Activated T-helper 1 cell treated with anti-CD3 and anti-CD28 coated beads, Interleukin-12 subunit alpha, Interleukin-12 subunit beta, Interleukin-2, Interleukin-4 antibody, amounts not matched to agents 30 ng/mL and 10 ng/mL and 1 ng/mL, durations not matched to agents 14 hours and 24 hours and 36 hours (primary cell): ENCODE measurements at regions of chr6 and their contacts with region 1.

Region 1: DNA sequence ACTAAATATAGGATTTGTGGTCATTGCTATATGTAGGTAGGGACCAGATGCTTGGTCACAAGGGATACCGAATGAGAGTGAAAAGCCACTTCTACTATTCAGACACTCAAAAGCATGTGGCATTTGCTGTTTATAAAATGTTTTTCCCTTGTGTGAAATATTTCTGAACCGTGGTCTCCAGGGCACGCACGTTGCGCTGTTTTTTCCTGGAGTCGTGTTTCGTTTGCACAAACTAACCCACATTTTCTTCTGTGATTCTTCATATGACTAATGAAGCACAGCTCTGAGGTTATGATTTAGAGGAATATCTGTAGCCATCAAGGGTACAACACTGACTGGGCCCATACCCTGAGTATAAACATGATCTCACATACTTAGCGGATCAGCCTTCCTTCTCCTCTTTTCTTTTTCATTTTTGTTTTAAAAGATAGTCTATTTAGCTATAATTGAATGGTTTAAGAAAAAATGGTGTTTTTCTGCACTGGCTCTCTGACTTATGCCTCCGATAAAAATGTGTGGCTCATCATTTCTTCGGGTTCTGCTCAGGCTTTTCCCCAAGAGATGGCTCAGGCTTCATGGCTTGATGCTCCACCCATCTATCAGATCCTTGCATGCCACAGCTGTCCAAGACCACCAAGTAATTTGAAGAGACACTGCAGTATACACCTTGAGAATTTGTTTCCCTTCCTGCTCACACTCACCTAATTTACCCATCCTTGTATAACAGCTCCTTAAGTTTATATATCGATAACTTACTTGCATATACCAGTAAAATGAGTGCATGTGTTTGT is 59.9 kb upstream of the HBS1L start:
- DNase-seq: peak; percentile 53
- H3K4me3 Mint-ChIP-seq: peak overlapping the region; percentile 66
- H3K27ac Mint-ChIP-seq: peak overlapping the region; percentile 97
- H3K4me1 Mint-ChIP-seq: peaks cover 88% of the 10 kb centered on the region
- H3K27me3 Mint-ChIP-seq: no peaks in the 10 kb centered on the region

Region 2: DNA sequence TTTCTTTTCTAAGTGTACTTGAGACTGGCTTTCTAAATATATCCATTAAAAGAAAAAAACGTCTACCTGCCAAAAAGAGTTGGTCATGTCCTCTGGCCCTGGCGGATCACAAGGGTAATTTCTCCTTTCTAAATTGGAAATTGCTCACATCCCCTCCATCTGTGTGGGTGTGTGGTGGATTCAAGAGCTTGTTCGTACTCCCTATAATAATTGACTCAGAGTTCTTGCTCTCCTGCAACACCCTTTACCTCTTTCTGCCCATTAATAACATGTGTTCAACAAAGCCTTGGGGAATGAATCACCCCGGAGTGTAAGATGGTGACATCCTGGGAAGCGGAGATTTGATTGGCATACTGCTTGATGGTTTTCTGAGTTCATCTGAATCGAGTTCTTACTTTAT is 428.5 kb before region 1 on chr6:
- intact Hi-C with region 1: no loop called
- DNase-seq: no peak
- H3K4me3 Mint-ChIP-seq: no peak overlapping the region
- H3K27ac Mint-ChIP-seq: no peak overlapping the region
- H3K4me1 Mint-ChIP-seq: no peaks in the 10 kb centered on the region
- H3K27me3 Mint-ChIP-seq: peaks cover 16% of the 10 kb centered on the region

Region 3: GRCh38 chr6:135030056-135030473 is 84.5 kb before region 1 on chr6:
- intact Hi-C with region 1: loop called (anchors 1 kb)
- DNase-seq: peak; percentile 12
- H3K4me3 Mint-ChIP-seq: peak overlapping the region; percentile 44
- H3K27ac Mint-ChIP-seq: peak overlapping the region; percentile 84
- H3K4me1 Mint-ChIP-seq: peaks cover 67% of the 10 kb centered on the region
- H3K27me3 Mint-ChIP-seq: no peaks in the 10 kb centered on the region

Region 4: DNA sequence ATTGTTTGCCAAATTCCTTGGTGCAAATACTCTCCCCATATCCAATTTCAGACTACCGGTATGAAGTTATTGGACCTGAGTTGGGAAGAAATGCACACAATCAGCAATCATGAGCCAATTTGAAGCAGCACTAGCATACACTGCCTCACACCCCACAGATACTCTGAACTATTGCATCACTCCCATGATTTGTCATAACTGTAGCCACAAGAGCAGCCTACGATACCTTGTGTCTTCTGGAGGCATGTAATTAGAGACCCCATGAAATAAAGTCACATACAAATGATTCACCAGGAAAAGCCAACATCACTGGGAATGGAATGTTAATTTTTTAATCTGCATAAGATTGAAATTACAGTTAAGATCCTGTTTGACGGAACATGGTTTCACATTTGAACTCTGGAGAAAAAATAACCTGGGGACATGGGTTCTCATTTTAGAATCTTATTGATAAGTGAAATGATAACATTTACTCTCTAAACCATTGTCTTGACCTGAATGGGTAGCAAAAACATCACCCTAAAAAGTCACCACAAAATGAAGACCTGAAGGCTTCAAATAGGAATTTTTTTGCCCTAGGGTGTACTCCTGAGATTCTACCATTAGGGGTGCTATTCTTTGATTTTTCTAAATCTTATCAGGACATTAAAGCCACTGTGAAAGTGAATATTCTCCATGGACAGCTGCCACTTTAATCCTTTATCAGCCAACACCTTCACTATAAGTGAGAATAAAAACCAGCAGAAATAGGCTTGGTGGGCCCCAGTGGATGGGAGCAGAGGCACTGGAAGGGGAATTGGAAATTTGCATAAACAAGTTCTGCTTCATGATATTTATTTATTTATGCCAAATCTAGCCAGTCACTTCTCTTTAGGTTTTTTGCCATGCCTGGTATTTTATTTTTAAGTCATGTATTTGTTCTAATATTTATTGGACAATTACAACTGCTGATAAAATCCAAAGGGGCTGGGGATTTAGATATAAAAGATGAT is 25.4 kb before region 1 on chr6:
- intact Hi-C with region 1: loop called (anchors 1 kb)
- DNase-seq: peak; percentile 58
- H3K4me3 Mint-ChIP-seq: peak overlapping the region; percentile 57
- H3K27ac Mint-ChIP-seq: peak overlapping the region; percentile 93
- H3K4me1 Mint-ChIP-seq: peaks cover 89% of the 10 kb centered on the region
- H3K27me3 Mint-ChIP-seq: no peaks in the 10 kb centered on the region

Region 5: GRCh38 chr6:135128268-135128914 is 13.8 kb after region 1 on chr6:
- intact Hi-C with region 1: loop called (anchors 1 kb)
- DNase-seq: peak; percentile 53
- H3K4me3 Mint-ChIP-seq: peak overlapping the region; percentile 66
- H3K27ac Mint-ChIP-seq: peak overlapping the region; percentile 97
- H3K4me1 Mint-ChIP-seq: peaks cover 63% of the 10 kb centered on the region
- H3K27me3 Mint-ChIP-seq: no peaks in the 10 kb centered on the region

Region 6: DNA sequence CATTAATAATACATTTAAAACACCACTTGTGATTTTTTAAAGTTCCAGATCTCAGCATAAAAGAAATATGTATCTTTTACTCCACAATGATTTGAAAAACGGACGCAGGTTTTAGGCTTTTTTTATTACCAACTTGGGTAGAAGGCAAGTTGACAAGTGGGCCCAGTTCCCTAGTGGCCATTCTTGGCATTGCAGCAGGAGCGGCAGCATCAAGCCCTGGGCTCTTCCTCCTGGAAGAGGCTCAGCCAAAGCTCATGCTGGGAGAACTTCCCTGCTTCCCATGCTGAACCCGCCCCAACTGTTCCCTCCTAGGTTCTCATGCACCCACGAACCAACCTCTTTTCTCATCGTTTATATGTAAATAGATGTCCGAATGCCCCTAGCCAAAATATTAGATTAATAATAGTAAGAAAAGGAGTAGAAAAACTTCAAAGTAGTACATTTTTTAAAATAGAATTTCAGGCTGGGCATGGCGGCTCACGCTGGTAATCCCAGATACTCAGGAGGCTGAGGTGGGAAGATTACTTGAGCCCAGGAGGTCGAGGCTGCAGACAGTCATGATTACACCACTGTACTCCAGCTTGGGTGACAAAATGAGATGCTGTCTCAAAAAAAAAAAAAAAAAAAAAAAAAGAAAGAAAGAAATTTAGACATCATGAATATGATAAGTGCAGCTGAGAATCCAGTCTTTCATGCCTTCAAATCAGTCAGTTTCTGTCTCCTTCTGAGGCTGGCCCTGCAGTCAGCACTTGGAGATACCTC is 48.3 kb after region 1 on chr6:
- intact Hi-C with region 1: loop called (anchors 1 kb)
- DNase-seq: no peak
- H3K4me3 Mint-ChIP-seq: peak overlapping the region; percentile 53
- H3K27ac Mint-ChIP-seq: peak overlapping the region; percentile 87
- H3K4me1 Mint-ChIP-seq: peaks cover 83% of the 10 kb centered on the region
- H3K27me3 Mint-ChIP-seq: no peaks in the 10 kb centered on the region

Region 7: GRCh38 chr6:135209803-135210202 is 95.3 kb after region 1 on chr6:
- intact Hi-C with region 1: no loop called
- DNase-seq: no peak
- H3K4me3 Mint-ChIP-seq: peak overlapping the region; percentile 65
- H3K27ac Mint-ChIP-seq: peak overlapping the region; percentile 85
- H3K4me1 Mint-ChIP-seq: peaks cover 50% of the 10 kb centered on the region
- H3K27me3 Mint-ChIP-seq: no peaks in the 10 kb centered on the region

Region 8: GRCh38 chr6:135382182-135382628 is 267.7 kb after region 1 on chr6:
- intact Hi-C with region 1: loop called (anchors 1 kb)
- DNase-seq: no peak
- H3K4me3 Mint-ChIP-seq: no peak overlapping the region
- H3K27ac Mint-ChIP-seq: peak overlapping the region; percentile 33
- H3K4me1 Mint-ChIP-seq: no peaks in the 10 kb centered on the region
- H3K27me3 Mint-ChIP-seq: no peaks in the 10 kb centered on the region